ENCODE measurements at regions of chr9 and their contacts with region 1.

Region 1: GRCh38 chr9:20224756-20225155 is 397.5 kb downstream of the MLLT3 start:
- DNase-seq: no peak
- H3K4me3 ChIP-seq: no peak overlapping the region
- H3K27ac ChIP-seq: no peak overlapping the region
- H3K4me1 ChIP-seq: no peaks in the 10 kb centered on the region
- H3K27me3 ChIP-seq: no peaks in the 10 kb centered on the region
- CTCF ChIP-seq: no peak

Region 2: DNA sequence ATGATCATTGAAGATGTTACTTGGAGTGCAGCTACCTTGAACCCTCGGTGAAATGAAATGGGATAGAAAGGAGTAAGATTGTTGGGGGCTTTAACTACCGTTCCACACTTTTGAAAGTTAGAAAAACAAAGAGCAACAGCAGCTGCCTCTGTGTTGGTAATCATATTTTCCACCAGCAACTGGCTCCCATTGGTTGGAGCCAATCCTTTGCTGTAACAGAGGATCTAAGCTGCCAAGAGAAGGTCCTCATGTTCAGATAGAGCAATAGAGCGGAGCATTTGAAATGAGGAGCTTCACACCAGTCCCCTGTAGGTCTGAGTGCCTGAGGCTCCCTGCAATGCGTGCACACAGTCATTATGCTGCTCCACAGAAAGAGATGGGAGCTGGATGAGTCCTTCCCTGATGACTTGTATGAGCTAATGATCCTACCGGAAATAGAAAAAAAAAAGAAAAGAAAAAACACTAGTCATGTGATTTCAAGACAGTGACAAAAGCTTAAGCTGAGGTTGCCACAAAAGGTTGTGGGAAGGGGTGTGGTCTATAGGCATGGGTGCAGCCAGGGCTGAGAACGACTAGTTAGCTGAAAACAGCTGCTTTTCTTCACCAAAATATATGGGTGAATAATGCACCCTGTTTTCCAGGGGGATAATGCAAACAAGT is 96.8 kb after region 1 on chr9:
- CTCF ChIA-PET with region 1: interaction called, 11 read pairs
- POLR2A ChIA-PET with region 1: no interaction called
- intact Hi-C with region 1: no loop called
- DNase-seq: no peak
- H3K4me3 ChIP-seq: no peak overlapping the region
- H3K27ac ChIP-seq: no peak overlapping the region
- H3K4me1 ChIP-seq: no peaks in the 10 kb centered on the region
- H3K27me3 ChIP-seq: no peaks in the 10 kb centered on the region
- CTCF ChIP-seq: no peak

Measured in PC-9 (cell line).